ENCODE measurements at regions of chr1 and their contacts with region 1.

Region 1: DNA sequence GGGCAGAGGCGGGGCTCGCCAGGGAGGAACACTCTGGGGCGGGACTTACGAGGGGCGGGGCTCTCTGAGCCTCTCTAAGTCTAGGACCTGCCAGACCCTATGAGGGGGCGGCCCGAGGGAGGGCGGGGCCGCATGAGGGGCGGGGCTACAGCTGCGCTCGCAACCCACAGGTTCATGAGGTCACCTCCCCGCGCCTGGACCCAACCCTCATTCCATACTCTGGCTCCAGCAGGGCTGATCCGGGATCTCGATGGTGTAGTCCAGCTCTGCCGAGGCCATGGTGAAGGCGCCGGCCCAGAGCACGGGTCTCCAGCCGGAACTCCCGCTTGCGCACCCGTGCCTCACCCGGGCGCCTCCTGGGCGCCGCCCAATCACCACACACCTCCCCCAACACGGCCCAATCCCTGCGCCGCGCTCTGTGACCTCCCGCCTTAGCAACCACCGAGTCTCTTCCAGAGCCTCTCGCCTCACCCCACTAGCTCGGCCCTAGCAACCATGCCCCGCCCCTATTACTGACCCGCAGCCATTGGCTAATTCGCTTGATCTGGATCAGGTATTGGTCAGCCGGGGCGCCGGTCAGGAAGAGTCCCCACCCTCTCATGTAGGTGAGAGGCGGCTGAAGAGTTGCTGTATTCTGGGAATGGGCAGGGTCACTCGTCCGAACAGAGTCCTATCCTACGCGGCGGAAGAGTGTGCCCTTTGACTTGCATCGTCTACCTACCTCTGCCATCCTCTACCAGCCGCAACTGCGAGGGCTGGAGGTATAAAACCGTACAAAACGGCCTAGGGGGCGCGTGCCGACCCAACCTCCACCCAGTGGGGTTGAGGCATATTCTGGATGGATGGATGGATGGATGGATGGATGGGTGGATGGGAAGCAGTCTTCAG is at the starts of genes ARMH1 and TMEM53:
- DNase-seq: peak; percentile 98
- ATAC-seq: peak; percentile 93
- H3K4me3 ChIP-seq: peak within 1 kb of the TSS; percentile 64 to 76 (median 67)
- H3K27ac ChIP-seq: peak within 1 kb of the TSS; percentile 93
- H3K4me1 ChIP-seq: peaks cover 65% of the 10 kb centered on the region
- H3K27me3 ChIP-seq: no peaks in the 10 kb centered on the region
- CTCF ChIP-seq: peak; percentile 32; the same call in 1 of the 2 replicates
- EP300 ChIP-seq: peak in 1 of 2 experiments; percentile 18; a peak in 2 of 4 replicates
- POLR2A ChIP-seq: peak; percentile 70 to 91
- RAD21 ChIP-seq: peak; percentile 47; the same call in 1 of the 2 replicates
- total RNA-seq, gene ARMH1: not detected in 2 replicates
- total RNA-seq, gene TMEM53: 12.6 and 13.8 TPM in 2 replicates

Region 2: GRCh38 chr1:44557778-44558177 is 116.6 kb before region 1 on chr1:
- CTCF ChIA-PET with region 1: no interaction called
- POLR2A ChIA-PET with region 1: no interaction called
- in situ Hi-C with region 1: no loop called
- intact Hi-C with region 1: no loop called
- DNase-seq: no peak
- ATAC-seq: no peak
- H3K4me3 ChIP-seq: no peak overlapping the region
- H3K27ac ChIP-seq: no peak overlapping the region
- H3K4me1 ChIP-seq: no peaks in the 10 kb centered on the region
- H3K27me3 ChIP-seq: peaks cover 0 to 18% of the 10 kb centered on the region in 2 experiments; a peak in 2 of 5 replicates
- CTCF ChIP-seq: no peak
- EP300 ChIP-seq: no peak
- POLR2A ChIP-seq: no peak
- RAD21 ChIP-seq: no peak

Region 3: DNA sequence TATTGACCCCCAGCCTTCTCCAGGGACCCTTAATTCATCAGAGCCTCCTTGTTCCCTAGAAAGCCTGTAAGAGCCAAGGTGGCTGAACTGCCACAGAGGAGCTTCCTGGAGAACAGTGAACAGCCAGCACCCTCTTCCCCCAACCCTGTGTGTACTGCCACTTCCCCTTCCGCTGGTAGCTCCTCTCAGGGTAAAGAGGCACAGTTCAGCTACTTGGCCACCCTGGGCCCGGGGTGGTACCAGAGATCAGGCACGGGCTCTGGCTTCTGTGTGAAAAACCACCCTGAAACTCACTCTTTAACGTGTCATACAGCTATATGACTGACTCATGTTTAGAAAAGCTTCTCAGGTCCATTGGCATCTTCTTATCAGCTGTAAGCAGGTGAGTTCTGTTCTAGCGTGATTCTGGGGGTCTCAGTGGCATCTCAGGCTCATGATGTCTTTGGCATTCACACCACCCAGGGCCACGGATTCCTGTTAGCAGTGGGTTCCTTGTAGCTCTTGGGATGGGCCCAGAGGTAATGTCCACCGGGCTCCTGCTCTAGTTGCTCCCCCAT is 22.5 kb after region 1 on chr1:
- CTCF ChIA-PET with region 1: no interaction called
- POLR2A ChIA-PET with region 1: interaction called, 20 read pairs
- in situ Hi-C with region 1: no loop called
- intact Hi-C with region 1: no loop called
- DNase-seq: no peak
- ATAC-seq: no peak
- H3K4me3 ChIP-seq: no peak overlapping the region
- H3K27ac ChIP-seq: no peak overlapping the region
- H3K4me1 ChIP-seq: peaks cover 47% of the 10 kb centered on the region
- H3K27me3 ChIP-seq: no peaks in the 10 kb centered on the region
- CTCF ChIP-seq: no peak
- EP300 ChIP-seq: no peak
- POLR2A ChIP-seq: no peak
- RAD21 ChIP-seq: no peak